HEK293T (cell line): ENCODE measurements at regions of chr5 and their contacts with region 1.

Region 1: DNA sequence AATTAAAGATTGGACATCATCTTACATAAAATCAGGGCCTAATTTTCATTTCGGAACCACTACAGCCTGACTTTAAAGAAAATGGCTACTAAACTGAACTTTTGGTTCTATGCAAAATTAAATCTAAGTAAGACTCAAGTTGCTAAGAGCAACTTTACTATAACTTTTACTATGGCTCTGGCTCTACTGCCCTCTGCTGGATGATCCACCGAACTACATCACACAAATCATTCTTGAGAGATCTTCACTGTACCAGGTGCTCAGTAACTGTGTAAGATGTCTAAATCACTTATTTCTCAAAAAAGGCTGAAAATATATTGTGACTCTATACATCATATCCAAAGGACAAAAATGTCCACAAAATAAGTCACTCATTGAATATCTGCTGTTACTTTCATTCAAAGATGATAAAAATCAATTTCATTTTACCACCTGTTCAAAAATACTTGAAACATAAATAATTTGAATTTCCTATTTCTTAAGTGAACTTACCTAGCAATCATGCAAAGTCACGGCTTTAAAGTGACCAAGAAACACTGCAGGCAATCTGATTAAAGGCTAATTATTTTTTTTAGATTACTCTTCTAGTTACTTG is 13.5 kb downstream of the MOCS2 start:
- DNase-seq: peak; percentile 50

Region 2: GRCh38 chr5:52948418-52949076 is 147.5 kb before region 1 on chr5:
- CTCF ChIA-PET with region 1: interaction called, 22 read pairs
- POLR2A ChIA-PET with region 1: no interaction called
- DNase-seq: peak; percentile 63